CD8-positive, alpha-beta T cell (primary cell): ENCODE measurements at regions of chr15 and their contacts with region 1.

Region 1: GRCh38 chr15:44426975-44427755 is at the start of gene CTDSPL2:
- DNase-seq: peak; percentile 88 to 97 (median 93)
- ATAC-seq: peak; percentile 95
- H3K4me3 ChIP-seq: peak within 1 kb of the TSS; percentile 61 to 83
- H3K4me3 Mint-ChIP-seq: peak within 1 kb of the TSS; percentile 98
- H3K27ac ChIP-seq: peak within 1 kb of the TSS; percentile 86
- H3K27ac Mint-ChIP-seq: peak within 1 kb of the TSS; percentile 98
- H3K4me1 ChIP-seq: peaks cover 25% of the 10 kb centered on the region
- H3K4me1 Mint-ChIP-seq: peaks cover 46% of the 10 kb centered on the region
- H3K27me3 ChIP-seq: no peaks in the 10 kb centered on the region
- H3K27me3 Mint-ChIP-seq: no peaks in the 10 kb centered on the region
- CTCF ChIP-seq: no peak
- total RNA-seq, gene CTDSPL2: 103 to 104 TPM

Region 2: DNA sequence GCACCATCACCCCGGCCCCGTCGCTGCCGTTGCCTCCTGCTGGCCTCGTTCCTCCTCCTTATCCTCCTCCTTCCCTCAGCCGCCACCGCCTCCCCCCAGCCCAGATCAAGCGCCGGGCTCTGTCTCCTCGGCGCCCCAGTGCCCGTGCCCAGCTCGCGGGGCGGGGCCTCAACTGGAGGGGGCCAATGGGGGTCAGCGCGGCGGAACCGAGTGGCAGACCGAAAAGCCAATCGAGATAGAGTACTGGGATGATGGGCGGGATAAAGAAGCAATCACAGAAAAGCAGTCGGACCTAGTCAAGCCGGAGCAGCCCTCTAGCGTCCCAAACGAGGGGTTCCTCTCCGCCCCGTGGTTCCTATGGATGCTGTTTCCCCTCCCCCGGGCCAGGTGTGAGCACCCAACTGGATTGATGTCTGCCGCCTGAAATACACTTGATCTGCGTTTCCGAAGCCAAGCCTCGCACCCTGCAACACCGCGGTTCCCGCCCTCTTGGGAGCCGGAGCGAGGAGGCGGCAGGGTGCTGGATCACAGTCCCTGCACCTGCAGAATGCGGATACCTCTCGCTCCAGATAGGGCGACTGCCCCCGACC is 231.9 kb before region 1 on chr15 and contains the start of gene FRMD5:
- CTCF ChIA-PET with region 1: no interaction called
- POLR2A ChIA-PET with region 1: no interaction called
- intact Hi-C with region 1: loop called in 1 of 2 experiments (anchors 2 kb)
- DNase-seq: peak; percentile 71 to 92 (median 84)
- ATAC-seq: peak; percentile 97
- H3K4me3 ChIP-seq: peak within 1 kb of the TSS; percentile 49 to 76
- H3K4me3 Mint-ChIP-seq: peak within 1 kb of the TSS; percentile 90
- H3K27ac ChIP-seq: no peak within 1 kb of the TSS
- H3K27ac Mint-ChIP-seq: no peak within 1 kb of the TSS
- H3K4me1 ChIP-seq: peaks cover 16% of the 10 kb centered on the region
- H3K4me1 Mint-ChIP-seq: peaks cover 19% of the 10 kb centered on the region
- H3K27me3 ChIP-seq: peaks cover 14% of the 10 kb centered on the region in 2 experiments
- H3K27me3 Mint-ChIP-seq: peaks cover 58% of the 10 kb centered on the region
- CTCF ChIP-seq: no peak
- total RNA-seq, gene FRMD5: not detected

Region 3: DNA sequence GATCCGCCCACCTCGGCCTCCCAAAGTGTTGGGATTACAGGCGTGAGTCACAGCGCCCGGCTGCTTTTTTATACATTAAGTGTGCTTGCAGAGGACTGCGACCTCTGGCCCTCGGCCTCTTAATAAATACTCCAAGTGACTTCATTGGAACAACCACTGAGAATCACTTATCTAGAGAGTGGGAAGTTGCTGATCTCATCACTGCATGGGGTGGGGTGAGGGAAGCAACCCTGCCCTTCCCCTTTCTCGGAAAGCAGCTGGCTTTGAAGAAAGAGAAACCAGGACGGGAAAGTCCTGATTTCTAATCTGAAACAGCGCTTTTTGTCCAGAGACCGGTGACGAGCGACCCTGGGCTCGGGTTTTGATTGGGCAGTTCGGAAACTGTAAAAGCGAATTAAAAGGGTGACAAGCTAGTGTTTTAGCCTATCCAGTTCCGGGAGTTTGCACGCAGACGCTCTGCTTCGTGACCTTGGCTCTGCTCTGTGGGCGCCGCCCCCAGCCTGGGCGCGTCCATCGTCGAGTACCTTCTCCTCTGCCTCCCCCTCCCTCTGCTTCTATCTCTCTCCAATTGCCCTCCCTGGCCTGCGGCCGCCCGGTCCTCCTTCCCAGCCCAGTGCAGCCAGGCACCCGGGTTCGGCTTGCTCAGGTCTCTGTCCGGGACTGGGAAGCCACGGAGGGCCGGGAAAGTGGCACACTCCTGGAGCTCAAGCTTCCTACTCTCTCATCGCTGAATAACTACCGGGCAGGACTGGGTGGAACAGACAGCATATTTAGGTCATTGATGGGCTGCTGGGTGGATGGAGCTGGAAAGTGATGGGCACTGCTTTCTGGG is 301.6 kb after region 1 on chr15:
- CTCF ChIA-PET with region 1: no interaction called
- POLR2A ChIA-PET with region 1: no interaction called
- intact Hi-C with region 1: loop called (anchors 1 to 5 kb)
- DNase-seq: peak; percentile 88 to 98 (median 95)
- ATAC-seq: peak; percentile 77
- H3K4me3 ChIP-seq: peak overlapping the region; percentile 84 to 95
- H3K4me3 Mint-ChIP-seq: peak overlapping the region; percentile 99
- H3K27ac ChIP-seq: peak overlapping the region; percentile 93 to 95
- H3K27ac Mint-ChIP-seq: peak overlapping the region; percentile 100
- H3K4me1 ChIP-seq: peaks cover 75% of the 10 kb centered on the region
- H3K4me1 Mint-ChIP-seq: peaks cover 80% of the 10 kb centered on the region
- H3K27me3 ChIP-seq: no peaks in the 10 kb centered on the region
- H3K27me3 Mint-ChIP-seq: no peaks in the 10 kb centered on the region
- CTCF ChIP-seq: no peak

Region 4: GRCh38 chr15:45022871-45023658 is 595.9 kb after region 1 on chr15 and contains the start of gene SORD:
- CTCF ChIA-PET with region 1: no interaction called
- POLR2A ChIA-PET with region 1: no interaction called
- intact Hi-C with region 1: loop called in 1 of 2 experiments (anchors 5 kb)
- DNase-seq: peak; percentile 75 to 92 (median 90)
- ATAC-seq: peak; percentile 99
- H3K4me3 ChIP-seq: peak within 1 kb of the TSS; percentile 74 to 92
- H3K4me3 Mint-ChIP-seq: peak within 1 kb of the TSS; percentile 88
- H3K27ac ChIP-seq: no peak within 1 kb of the TSS
- H3K27ac Mint-ChIP-seq: peak within 1 kb of the TSS; percentile 69
- H3K4me1 ChIP-seq: peaks cover 12% of the 10 kb centered on the region
- H3K4me1 Mint-ChIP-seq: peaks cover 36% of the 10 kb centered on the region
- H3K27me3 ChIP-seq: no peaks in the 10 kb centered on the region
- H3K27me3 Mint-ChIP-seq: peaks cover 13% of the 10 kb centered on the region
- CTCF ChIP-seq: no peak
- total RNA-seq, gene SORD: 1.2 to 1.4 TPM